ENCODE measurements at regions of chr7 and their contacts with region 1.

Region 1: DNA sequence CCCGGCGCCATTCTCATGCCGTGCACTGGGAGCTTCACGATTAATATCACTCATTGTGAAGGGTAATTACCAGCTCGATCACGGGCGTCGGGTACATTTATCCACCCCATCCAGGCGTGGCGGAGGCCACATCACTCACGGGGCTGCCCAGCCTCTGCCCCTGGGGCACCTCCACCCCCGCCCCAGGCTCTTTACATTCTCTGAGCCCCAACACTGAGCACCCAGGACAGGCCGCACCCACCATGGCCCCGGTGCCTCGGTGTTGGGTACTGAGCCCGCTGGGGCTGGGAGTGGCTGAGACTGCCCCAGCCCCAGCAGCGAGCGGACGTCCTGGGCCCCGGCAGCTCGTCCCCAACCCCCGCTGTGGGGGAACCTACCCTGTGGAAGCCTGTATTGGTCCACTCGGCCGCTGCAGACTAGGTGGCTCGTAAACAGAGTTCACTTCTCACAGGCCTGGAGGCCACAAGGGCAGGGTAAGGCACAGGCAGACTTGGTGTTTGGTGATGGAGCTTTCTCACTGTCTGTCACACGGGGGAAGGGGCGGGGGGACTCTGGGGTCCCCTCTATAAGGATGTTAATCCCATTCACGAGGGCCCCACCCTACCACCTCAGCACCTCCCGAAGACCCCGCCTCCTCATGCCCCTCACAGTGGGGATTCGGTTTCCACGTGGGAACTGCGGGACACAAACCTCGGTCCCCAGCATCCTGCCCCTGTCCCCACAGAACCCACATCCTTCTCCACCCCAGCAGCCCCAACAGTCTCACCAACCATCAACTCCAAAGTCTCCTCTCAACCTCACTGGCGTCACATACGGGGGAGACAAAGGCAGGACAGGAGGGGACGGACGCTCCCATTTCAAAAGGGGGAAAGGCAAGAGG is 184.1 kb downstream of the ELFN1 start:
- DNase-seq: peak; percentile 2 to 44
- ATAC-seq: no peak
- H3K4me3 ChIP-seq: no peak overlapping the region
- H3K27ac ChIP-seq: peak overlapping the region; percentile 55
- H3K4me1 ChIP-seq: peaks cover 12% of the 10 kb centered on the region
- H3K27me3 ChIP-seq: no peaks in the 10 kb centered on the region
- CTCF ChIP-seq: no peak

Region 2: DNA sequence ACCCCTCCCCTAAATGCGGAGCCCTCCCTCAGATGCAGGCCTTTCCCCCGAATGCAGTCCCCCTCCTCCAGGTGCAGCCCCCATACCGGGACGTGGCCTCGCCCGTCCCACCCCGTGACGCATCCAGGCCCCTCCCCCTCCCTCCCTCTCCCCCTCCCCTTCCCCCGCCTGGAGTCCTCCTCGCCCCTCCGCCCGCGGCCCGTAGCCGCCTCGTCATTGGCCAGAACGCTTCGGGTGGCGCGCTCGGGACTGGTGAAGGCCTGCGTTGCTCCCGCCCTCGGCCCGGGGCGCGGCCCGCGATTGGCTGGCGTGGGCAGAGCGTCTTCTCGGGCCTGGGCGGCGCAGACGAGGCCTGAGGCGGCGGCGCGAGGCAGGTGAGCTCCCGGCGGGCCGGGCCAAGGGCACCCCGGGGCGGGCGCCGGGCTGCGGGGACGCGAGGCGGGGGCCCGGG is 1037.9 kb before region 1 on chr7:
- intact Hi-C with region 1: loop called in 1 of 2 experiments (anchors 5 kb)
- DNase-seq: peak; percentile 99
- ATAC-seq: peak; percentile 87 to 94 (median 92)
- H3K4me3 ChIP-seq: peak overlapping the region; percentile 72
- H3K27ac ChIP-seq: peak overlapping the region; percentile 91
- H3K4me1 ChIP-seq: peaks cover 65% of the 10 kb centered on the region
- H3K27me3 ChIP-seq: no peaks in the 10 kb centered on the region
- CTCF ChIP-seq: no peak

Region 3: DNA sequence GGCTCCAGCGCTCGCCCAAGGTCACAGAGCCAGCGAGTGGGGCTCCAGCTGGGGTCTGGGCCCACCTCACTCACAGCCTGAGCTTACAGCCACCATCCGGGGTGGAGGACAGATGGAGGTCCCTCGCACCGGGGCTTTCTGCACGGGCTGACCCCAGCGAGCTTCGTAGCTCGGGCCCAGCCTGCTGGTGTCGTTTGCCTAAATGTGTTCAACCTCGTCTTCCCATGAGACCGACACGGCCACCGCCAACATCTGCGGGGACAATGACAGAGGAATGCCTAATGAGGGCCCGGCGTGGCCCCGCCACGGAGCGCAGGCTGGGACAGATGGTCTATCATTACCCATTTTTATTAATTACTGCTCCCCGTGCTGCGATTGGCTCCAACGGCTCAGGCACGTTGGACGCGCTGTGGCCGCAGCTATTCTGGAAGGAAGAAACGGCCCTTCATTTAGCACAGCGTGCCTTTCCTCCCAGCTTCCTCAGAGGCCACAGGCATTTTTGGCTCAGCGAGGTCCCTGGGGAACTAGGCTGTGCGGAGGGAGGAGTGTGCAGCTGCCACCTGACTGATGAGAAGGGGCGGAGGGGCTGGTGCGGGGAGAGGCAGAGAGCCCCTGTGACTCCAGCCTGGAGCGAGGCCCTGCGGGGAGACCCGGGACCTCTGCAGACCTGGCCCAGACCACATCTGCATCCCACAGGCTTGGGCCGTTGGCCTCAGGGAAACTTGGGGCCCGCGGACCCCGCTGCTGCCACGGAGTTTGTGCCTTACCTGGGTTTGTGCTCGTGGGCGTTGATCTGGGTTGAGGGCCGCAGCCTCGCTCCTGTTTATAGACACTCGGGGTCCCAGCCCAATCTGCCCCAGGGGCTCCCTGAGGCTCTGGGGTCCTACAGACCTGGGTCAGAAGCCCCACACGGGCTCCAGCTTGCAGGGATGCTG is 207.0 kb before region 1 on chr7:
- intact Hi-C with region 1: no loop called
- DNase-seq: peak; percentile 52 to 86
- ATAC-seq: peak; percentile 74 to 85 (median 80)
- H3K4me3 ChIP-seq: peak overlapping the region; percentile 44
- H3K27ac ChIP-seq: peak overlapping the region; percentile 97
- H3K4me1 ChIP-seq: peaks cover 24% of the 10 kb centered on the region
- H3K27me3 ChIP-seq: peaks cover 0 to 3% (median 0%) of the 10 kb centered on the region in 3 donors
- CTCF ChIP-seq: no peak

Measured in psoas muscle (tissue), 8 donors.